ENCODE measurements at regions of chr9 and their contacts with region 1.

Region 1: GRCh38 chr9:137064027-137064879 is 6.1 kb downstream of the SAPCD2 start:
- DNase-seq: peak; percentile 69
- CTCF ChIP-seq: peak; percentile 94

Region 2: DNA sequence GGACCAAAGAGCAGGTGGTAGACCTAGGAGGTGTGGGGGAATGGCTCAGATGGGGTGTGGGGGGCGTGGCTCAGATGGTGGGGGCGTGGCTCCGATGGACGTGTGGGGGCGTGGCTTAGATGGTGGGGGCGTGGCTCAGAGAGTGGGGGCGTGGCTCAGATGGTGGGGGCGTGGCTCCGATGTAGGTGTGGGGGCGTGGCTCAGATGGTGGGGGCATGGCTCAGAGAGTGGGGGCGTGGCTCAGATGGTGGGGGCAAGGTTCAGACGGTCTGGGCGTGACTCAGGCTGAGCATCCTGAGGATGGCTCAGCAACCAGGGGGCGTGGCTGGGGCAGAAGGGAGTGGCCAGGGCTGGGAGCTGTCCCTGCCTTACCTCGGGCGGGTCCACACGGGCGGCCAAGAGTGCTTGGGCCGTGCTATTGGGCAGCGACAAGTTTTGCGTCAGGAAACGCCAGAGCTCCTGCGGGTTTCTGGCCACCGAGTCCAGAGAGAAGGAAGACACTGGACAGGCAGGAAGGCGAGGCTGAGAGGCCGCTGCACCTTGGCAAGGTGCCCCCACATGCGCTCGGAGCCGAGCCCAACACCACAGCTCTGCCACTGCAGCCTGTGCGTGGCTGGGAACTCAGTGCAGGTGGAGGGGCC is 42.2 kb before region 1 on chr9:
- CTCF ChIA-PET with region 1: interaction called, 17 read pairs
- POLR2A ChIA-PET with region 1: no interaction called
- DNase-seq: peak; percentile 61
- CTCF ChIP-seq: no peak

Region 3: GRCh38 chr9:137105814-137106661 is 41.8 kb after region 1 on chr9:
- CTCF ChIA-PET with region 1: no interaction called
- POLR2A ChIA-PET with region 1: no interaction called
- DNase-seq: no peak
- CTCF ChIP-seq: no peak